CD14-positive monocyte (primary cell): ENCODE measurements at regions of chr15 and their contacts with region 1.

Region 1: GRCh38 chr15:90529371-90530249 is at the start of gene CRTC3:
- DNase-seq: peak in 2 of 3 donors; percentile 53 to 63
- H3K4me3 ChIP-seq: peak within 1 kb of the TSS; percentile 54 to 82 (median 70)
- H3K4me3 Mint-ChIP-seq: peak within 1 kb of the TSS; percentile 96 to 99
- H3K27ac ChIP-seq: peak within 1 kb of the TSS in 1 of 2 donors; percentile 73
- H3K27ac Mint-ChIP-seq: peak within 1 kb of the TSS; percentile 62 to 89 (median 76)
- H3K4me1 ChIP-seq: peaks cover 18 to 25% of the 10 kb centered on the region in 2 donors
- H3K4me1 Mint-ChIP-seq: peaks cover 35% of the 10 kb centered on the region
- H3K27me3 ChIP-seq: no peaks in the 10 kb centered on the region
- H3K27me3 Mint-ChIP-seq: peaks cover 5 to 14% (median 7%) of the 10 kb centered on the region in 3 donors
- CTCF ChIP-seq: no peak
- polyA plus RNA-seq, gene CRTC3: 6.0 to 25.4 (median 12.2) TPM

Region 2: GRCh38 chr15:90598031-90598577 is 68.5 kb after region 1 on chr15:
- intact Hi-C with region 1: loop called (anchors 10 kb)
- DNase-seq: peak; percentile 36 to 45 (median 39)
- H3K4me3 ChIP-seq: no peak overlapping the region
- H3K4me3 Mint-ChIP-seq: no peak overlapping the region
- H3K27ac ChIP-seq: peak overlapping the region; percentile 59 to 77
- H3K27ac Mint-ChIP-seq: peak overlapping the region; percentile 66 to 90 (median 87)
- H3K4me1 ChIP-seq: peaks cover 44 to 55% of the 10 kb centered on the region in 2 donors
- H3K4me1 Mint-ChIP-seq: peaks cover 54% of the 10 kb centered on the region
- H3K27me3 ChIP-seq: no peaks in the 10 kb centered on the region
- H3K27me3 Mint-ChIP-seq: peaks cover 0 to 1% (median 0%) of the 10 kb centered on the region in 3 donors
- CTCF ChIP-seq: peak; percentile 42

Region 3: GRCh38 chr15:90603893-90604292 is 74.3 kb after region 1 on chr15:
- intact Hi-C with region 1: loop called (anchors 10 kb)
- DNase-seq: peak; percentile 31 to 43 (median 43)
- H3K4me3 ChIP-seq: no peak overlapping the region
- H3K4me3 Mint-ChIP-seq: no peak overlapping the region
- H3K27ac ChIP-seq: no peak overlapping the region
- H3K27ac Mint-ChIP-seq: no peak overlapping the region
- H3K4me1 ChIP-seq: peaks cover 0 to under 1% of the 10 kb centered on the region in 2 donors
- H3K4me1 Mint-ChIP-seq: peaks cover 2% of the 10 kb centered on the region
- H3K27me3 ChIP-seq: no peaks in the 10 kb centered on the region
- H3K27me3 Mint-ChIP-seq: no peaks in the 10 kb centered on the region
- CTCF ChIP-seq: peak; percentile 71

Region 4: DNA sequence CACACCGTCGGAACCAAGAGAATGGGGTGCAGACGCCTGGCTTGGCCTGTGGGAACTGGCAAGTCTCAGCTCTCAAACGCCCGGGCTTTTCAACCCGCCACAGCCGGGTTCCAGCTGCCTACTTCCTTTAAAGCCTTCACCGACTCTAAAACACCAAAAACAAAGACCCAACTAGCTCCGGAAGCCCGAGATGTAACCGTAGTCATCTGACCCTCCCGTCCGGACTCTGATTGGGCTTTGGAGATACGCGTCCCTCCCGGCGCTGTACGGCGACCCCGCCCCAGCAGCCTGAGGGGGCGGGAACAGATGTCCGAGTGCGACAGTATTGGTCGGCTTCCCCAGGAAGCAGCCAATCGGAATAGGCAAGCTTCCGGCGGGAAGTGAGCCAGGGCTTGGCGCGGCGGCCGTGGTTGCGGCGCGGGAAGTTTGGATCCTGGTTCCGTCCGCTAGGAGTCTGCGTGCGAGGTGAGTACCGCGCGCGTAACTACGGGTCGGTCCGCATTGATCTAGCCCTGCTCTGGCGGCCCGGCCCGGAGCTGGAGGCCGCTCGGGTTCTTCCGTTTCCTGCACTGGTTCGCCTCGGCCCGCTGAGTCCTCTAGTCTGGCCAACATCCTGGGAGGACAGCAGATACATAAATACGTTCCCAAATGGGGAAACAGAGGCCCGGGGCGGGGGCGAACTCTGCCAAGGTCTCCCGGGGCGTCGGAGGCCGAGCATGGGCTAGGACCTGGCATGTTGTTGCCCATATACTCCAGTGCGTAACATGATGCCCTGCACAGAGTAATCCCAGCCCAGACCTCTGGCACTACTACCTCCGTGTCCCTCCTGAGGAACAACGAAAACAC is 187.6 kb after region 1 on chr15 and contains the start of gene BLM:
- intact Hi-C with region 1: no loop called
- DNase-seq: peak; percentile 96 to 98 (median 98)
- H3K4me3 ChIP-seq: peak within 1 kb of the TSS; percentile 83 to 98 (median 83)
- H3K4me3 Mint-ChIP-seq: peak within 1 kb of the TSS; percentile 93 to 98
- H3K27ac ChIP-seq: peak within 1 kb of the TSS; percentile 87 to 96
- H3K27ac Mint-ChIP-seq: peak within 1 kb of the TSS; percentile 89 to 99 (median 96)
- H3K4me1 ChIP-seq: peaks cover 12 to 26% of the 10 kb centered on the region in 2 donors
- H3K4me1 Mint-ChIP-seq: peaks cover 26% of the 10 kb centered on the region
- H3K27me3 ChIP-seq: no peaks in the 10 kb centered on the region
- H3K27me3 Mint-ChIP-seq: peaks cover 0 to 2% (median 0%) of the 10 kb centered on the region in 3 donors
- CTCF ChIP-seq: peak; percentile 36
- polyA plus RNA-seq, gene BLM: 0.69 to 2.3 (median 1.2) TPM